K562 (cell line): ENCODE measurements at regions of chr1 and their contacts with region 1.

Region 1: GRCh38 chr1:205907794-205908193 is 35.5 kb downstream of the SLC26A9 start:
- DNase-seq: peak in 3 of 4 experiments; percentile 7 to 36 (median 14)
- ATAC-seq: peak; percentile 85
- H3K4me3 ChIP-seq: no peak overlapping the region
- H3K27ac ChIP-seq: no peak overlapping the region
- H3K4me1 ChIP-seq: no peaks in the 10 kb centered on the region
- H3K27me3 ChIP-seq: peaks cover 3 to 5% of the 10 kb centered on the region in 2 experiments; a peak in 4 of 5 replicates
- CTCF ChIP-seq: peak; percentile 59 to 72 (median 63)
- EP300 ChIP-seq: no peak
- POLR2A ChIP-seq: no peak
- RAD21 ChIP-seq: peak; percentile 64 to 71

Region 2: DNA sequence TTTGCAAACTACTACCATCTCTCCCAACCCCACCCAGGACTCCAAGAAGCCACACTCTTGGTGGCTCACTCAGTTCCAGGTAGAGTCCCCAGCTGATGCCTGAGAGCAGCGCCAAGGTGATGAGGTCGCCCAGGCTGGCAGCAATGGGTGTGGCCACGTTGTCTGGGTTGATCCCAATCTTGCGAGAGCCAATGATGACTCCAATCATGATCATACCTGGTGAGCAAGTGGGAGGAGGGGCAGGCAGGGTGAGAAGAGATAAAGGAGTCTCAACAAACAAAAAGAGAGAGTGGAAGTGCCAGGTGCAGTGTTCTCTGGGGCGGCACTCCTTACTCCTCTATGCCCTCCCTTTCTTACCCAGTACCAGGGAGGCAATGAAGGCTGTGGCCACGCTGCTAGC is 109.2 kb before region 1 on chr1:
- CTCF ChIA-PET with region 1: no interaction called
- POLR2A ChIA-PET with region 1: no interaction called
- in situ Hi-C with region 1: no loop called
- intact Hi-C with region 1: no loop called
- DNase-seq: no peak
- ATAC-seq: no peak
- H3K4me3 ChIP-seq: no peak overlapping the region
- H3K27ac ChIP-seq: no peak overlapping the region
- H3K4me1 ChIP-seq: peaks cover 8 to 22% of the 10 kb centered on the region in 2 experiments; a peak in 4 of 5 replicates
- H3K27me3 ChIP-seq: no peaks in the 10 kb centered on the region
- CTCF ChIP-seq: no peak
- EP300 ChIP-seq: no peak
- POLR2A ChIP-seq: no peak
- RAD21 ChIP-seq: no peak

Region 3: DNA sequence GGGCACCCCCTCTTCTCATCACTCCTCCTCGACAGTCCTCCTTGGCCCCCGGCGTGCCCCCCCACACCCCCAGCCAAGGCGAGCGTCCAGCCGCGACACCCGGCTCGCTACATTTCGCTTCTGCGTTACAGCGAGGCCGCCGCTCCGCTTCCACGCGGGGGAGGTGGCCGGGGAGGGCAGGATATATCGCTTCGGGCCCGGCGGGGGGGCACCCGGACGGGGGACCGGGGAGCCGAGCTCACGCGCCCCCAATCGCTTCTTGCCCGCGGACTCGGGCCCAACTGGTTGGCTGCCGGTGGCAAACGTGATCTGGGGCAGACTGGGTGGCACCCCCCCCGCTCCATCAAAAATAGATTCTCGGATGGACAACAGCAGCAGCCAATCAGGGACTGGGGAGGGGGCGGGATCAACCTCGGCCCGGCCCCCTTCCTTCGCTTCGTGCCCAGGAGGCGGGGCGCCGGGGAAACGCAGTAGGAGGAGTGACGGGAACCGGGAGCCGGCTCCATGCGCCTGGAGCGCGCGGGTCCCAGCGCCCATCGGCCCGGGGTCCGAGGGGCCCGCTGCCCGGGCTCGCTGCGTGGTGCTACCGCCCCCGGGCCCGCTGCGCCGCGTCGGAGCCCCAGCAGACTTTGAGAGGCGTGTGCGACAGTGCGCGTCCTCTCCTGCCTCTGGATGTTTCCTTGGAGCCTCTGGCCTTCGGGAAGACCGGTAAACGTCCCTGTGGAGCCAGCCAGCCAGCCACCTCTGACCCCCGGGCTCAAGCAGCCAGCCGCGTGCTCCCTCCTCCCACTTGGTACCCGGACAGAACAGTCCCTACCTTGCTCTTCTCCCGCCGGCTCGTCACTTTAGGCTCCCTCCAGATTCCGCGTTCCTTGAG is 94.7 kb before region 1 on chr1 and contains the start of gene SLC41A1:
- CTCF ChIA-PET with region 1: no interaction called
- POLR2A ChIA-PET with region 1: interaction called, 4 read pairs
- in situ Hi-C with region 1: no loop called
- intact Hi-C with region 1: loop called (anchors 5 kb)
- DNase-seq: peak; percentile 95 to 100 (median 100)
- ATAC-seq: peak; percentile 95
- H3K4me3 ChIP-seq: peak within 1 kb of the TSS; percentile 85
- H3K27ac ChIP-seq: peak within 1 kb of the TSS; percentile 60
- H3K4me1 ChIP-seq: peaks cover 32 to 41% of the 10 kb centered on the region in 2 experiments; a peak in 4 of 5 replicates
- H3K27me3 ChIP-seq: no peaks in the 10 kb centered on the region
- CTCF ChIP-seq: no peak
- EP300 ChIP-seq: no peak
- POLR2A ChIP-seq: peak; percentile 68
- RAD21 ChIP-seq: no peak
- polyA plus RNA-seq, gene SLC41A1: 4.1 to 5.5 TPM